ENCODE measurements at regions of chr6 and their contacts with region 1.

Region 1: DNA sequence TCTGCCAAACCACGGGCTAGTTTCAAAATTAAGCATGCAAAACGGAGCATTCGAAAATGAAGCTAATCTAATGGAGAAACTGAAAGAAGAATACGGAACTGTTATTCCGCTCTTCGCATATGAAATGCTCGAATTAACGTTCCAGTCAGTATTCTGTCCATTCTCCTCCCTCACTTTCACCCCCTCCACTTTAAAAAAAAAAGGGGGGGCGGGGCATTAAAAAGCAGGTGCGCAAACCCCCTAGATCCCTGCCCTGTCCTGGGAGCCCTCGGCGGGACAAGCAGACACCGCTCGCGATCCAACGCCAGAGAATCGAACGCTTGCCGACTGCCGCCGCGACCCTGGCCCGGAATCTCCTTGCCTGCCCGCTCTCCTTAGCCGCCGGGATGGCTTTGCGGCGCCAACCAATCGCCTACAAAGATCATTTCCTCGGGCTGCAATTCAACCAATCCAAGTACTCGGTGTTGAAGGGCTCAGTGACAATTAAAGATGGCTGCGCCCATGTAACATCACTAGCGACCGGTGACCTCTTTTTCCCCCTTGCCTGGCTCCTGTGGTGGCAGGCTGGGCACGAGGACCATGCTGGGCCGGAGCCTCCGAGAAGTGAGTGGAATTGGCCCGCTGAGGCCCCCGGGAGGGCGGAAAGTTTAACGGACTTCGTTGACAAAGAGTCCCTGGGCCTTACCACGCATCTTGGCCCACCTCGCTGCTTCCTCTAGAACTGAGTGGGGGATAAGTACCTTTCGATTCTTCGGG is at the starts of genes QRSL1 and RTN4IP1:
- DNase-seq: peak; percentile 95
- H3K4me3 Mint-ChIP-seq: peak within 1 kb of the TSS; percentile 92
- H3K27ac Mint-ChIP-seq: peak within 1 kb of the TSS; percentile 97
- H3K4me1 Mint-ChIP-seq: peaks cover 18% of the 10 kb centered on the region
- H3K27me3 Mint-ChIP-seq: no peaks in the 10 kb centered on the region
- total RNA-seq, gene QRSL1: 22.4 and 24.2 TPM in 2 replicates
- total RNA-seq, gene RTN4IP1: 7.2 and 8.0 TPM in 2 replicates

Region 2: GRCh38 chr6:106325336-106326178 is 303.7 kb before region 1 on chr6 and contains the start of gene ATG5:
- intact Hi-C with region 1: loop called (anchors 1 kb)
- DNase-seq: peak; percentile 100
- H3K4me3 Mint-ChIP-seq: peak within 1 kb of the TSS; percentile 100
- H3K27ac Mint-ChIP-seq: peak within 1 kb of the TSS; percentile 100
- H3K4me1 Mint-ChIP-seq: peaks cover 37% of the 10 kb centered on the region
- H3K27me3 Mint-ChIP-seq: peaks cover 31% of the 10 kb centered on the region
- total RNA-seq, gene ATG5: 29.5 and 30.7 TPM in 2 replicates